CD4-positive, alpha-beta T cell (primary cell): ENCODE measurements at regions of chr1 and their contacts with region 1.

Region 1: DNA sequence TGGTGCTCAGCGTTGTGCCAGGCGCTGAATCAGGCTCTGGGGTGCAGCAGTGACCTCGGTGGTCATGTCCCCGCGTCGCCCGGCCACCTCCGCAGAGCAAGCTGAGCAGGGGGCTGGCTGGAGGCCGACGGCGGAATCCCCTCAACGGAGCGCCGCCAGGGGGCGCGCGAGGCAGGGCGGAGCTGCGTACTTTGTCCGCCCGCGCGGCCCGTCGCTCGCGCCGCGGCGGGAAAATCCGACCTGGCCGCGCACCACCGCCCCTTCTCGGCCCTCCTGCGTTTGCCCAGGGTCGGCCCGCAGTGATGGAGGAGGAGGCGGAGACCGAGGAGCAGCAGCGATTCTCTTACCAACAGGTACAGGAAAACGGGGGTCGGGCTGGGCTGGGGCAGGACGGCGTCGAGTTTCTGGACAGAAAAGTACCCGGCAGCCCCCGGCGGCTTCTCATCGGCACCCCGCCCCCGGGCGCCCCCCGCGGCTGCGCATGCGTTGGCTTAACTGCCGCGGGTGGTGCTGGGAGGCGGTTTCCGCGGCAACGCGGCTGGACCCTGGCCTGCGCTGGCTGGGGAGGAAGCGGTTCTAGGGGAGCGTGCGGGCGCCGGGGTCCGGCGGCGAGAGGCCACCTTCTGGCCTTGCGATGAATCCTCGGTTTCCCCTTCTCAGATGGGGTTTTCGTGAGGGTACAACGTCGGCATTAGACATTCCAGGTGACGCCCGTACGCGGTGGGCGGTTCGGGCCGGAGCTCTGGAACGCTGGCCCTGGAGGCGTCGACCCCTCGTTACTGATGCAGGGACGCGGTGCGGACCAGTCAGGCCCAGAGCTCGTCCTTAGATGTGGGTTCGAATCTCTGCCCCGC is at the start of gene CENPS:
- DNase-seq: peak; percentile 72 to 95 (median 90)
- ATAC-seq: peak; percentile 79
- H3K4me3 ChIP-seq: peak within 1 kb of the TSS; percentile 71
- H3K4me3 Mint-ChIP-seq: peak within 1 kb of the TSS; percentile 94
- H3K27ac ChIP-seq: peak within 1 kb of the TSS; percentile 65 to 68
- H3K27ac Mint-ChIP-seq: peak within 1 kb of the TSS; percentile 92
- H3K4me1 ChIP-seq: peaks cover 26% of the 10 kb centered on the region
- H3K4me1 Mint-ChIP-seq: peaks cover 23% of the 10 kb centered on the region
- H3K27me3 ChIP-seq: no peaks in the 10 kb centered on the region
- H3K27me3 Mint-ChIP-seq: no peaks in the 10 kb centered on the region
- CTCF ChIP-seq: peak; percentile 98
- total RNA-seq, gene CENPS: 3.7 to 4.0 TPM

Region 2: GRCh38 chr1:9874959-9875635 is 555.3 kb before region 1 on chr1:
- CTCF ChIA-PET with region 1: no interaction called
- POLR2A ChIA-PET with region 1: no interaction called
- intact Hi-C with region 1: loop called (anchors 1 kb)
- DNase-seq: peak; percentile 62 to 87 (median 68)
- ATAC-seq: peak; percentile 99
- H3K4me3 ChIP-seq: no peak overlapping the region
- H3K4me3 Mint-ChIP-seq: no peak overlapping the region
- H3K27ac ChIP-seq: no peak overlapping the region
- H3K27ac Mint-ChIP-seq: no peak overlapping the region
- H3K4me1 ChIP-seq: peaks cover 7% of the 10 kb centered on the region
- H3K4me1 Mint-ChIP-seq: peaks cover 7% of the 10 kb centered on the region
- H3K27me3 ChIP-seq: no peaks in the 10 kb centered on the region
- H3K27me3 Mint-ChIP-seq: no peaks in the 10 kb centered on the region
- CTCF ChIP-seq: peak; percentile 93

Region 3: DNA sequence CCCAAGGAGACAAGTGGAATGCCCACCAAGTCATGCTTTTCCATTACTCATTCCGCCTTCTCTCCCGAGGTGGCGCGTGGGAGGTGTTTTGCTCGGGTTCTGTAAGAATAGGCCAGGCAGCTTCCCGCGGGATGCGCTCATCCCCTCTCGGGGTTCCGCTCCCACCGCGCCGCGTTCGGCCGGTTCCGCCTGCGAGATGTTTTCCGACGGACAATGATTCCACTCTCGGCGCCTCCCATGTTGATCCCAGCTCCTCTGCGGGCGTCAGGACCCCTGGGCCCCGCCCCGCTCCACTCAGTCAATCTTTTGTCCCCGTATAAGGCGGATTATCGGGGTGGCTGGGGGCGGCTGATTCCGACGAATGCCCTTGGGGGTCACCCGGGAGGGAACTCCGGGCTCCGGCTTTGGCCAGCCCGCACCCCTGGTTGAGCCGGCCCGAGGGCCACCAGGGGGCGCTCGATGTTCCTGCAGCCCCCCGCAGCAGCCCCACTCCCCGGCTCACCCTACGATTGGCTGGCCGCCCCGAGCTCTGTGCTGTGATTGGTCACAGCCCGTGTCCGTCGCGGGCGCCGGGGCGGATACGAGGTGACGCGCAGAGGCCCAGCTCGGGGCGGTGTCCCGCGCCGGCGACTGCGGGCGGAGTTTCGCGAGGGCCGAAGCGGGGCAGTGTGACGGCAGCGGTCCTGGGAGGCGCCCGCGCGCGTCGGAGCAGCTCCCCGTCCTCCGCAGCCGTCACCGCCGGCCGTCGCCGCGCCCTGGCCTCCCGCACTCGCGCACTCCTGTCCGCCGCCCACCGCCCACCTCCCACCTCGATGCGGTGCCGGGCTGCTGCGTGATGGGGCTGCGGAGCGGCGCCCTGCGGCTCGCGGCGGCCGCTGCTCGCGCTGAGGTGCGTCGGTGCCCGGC is 220.3 kb before region 1 on chr1 and contains the start of gene KIF1B:
- CTCF ChIA-PET with region 1: interaction called, 18 read pairs
- POLR2A ChIA-PET with region 1: interaction called, 14 read pairs
- intact Hi-C with region 1: loop called (anchors 1 kb)
- DNase-seq: peak; percentile 91 to 98 (median 96)
- ATAC-seq: peak; percentile 99
- H3K4me3 ChIP-seq: peak within 1 kb of the TSS; percentile 76
- H3K4me3 Mint-ChIP-seq: peak within 1 kb of the TSS; percentile 94
- H3K27ac ChIP-seq: no peak within 1 kb of the TSS
- H3K27ac Mint-ChIP-seq: peak within 1 kb of the TSS; percentile 82
- H3K4me1 ChIP-seq: peaks cover 17% of the 10 kb centered on the region
- H3K4me1 Mint-ChIP-seq: peaks cover 37% of the 10 kb centered on the region
- H3K27me3 ChIP-seq: no peaks in the 10 kb centered on the region
- H3K27me3 Mint-ChIP-seq: peaks cover 4% of the 10 kb centered on the region
- CTCF ChIP-seq: peak; percentile 99
- total RNA-seq, gene KIF1B: 7.9 to 9.7 TPM

Region 4: GRCh38 chr1:10398734-10399623 is 31.5 kb before region 1 on chr1 and contains the start of gene PGD:
- CTCF ChIA-PET with region 1: interaction called, 19 read pairs
- POLR2A ChIA-PET with region 1: interaction called, 5 read pairs
- intact Hi-C with region 1: loop called in 1 of 2 experiments (anchors 1 kb)
- DNase-seq: peak; percentile 92 to 98 (median 96)
- ATAC-seq: peak; percentile 97
- H3K4me3 ChIP-seq: peak within 1 kb of the TSS; percentile 96
- H3K4me3 Mint-ChIP-seq: peak within 1 kb of the TSS; percentile 98
- H3K27ac ChIP-seq: peak within 1 kb of the TSS; percentile 56 to 70
- H3K27ac Mint-ChIP-seq: peak within 1 kb of the TSS; percentile 79
- H3K4me1 ChIP-seq: peaks cover 21% of the 10 kb centered on the region
- H3K4me1 Mint-ChIP-seq: peaks cover 20% of the 10 kb centered on the region
- H3K27me3 ChIP-seq: no peaks in the 10 kb centered on the region
- H3K27me3 Mint-ChIP-seq: no peaks in the 10 kb centered on the region
- CTCF ChIP-seq: no peak
- total RNA-seq, gene PGD: 16.7 to 17.4 TPM

Region 5: DNA sequence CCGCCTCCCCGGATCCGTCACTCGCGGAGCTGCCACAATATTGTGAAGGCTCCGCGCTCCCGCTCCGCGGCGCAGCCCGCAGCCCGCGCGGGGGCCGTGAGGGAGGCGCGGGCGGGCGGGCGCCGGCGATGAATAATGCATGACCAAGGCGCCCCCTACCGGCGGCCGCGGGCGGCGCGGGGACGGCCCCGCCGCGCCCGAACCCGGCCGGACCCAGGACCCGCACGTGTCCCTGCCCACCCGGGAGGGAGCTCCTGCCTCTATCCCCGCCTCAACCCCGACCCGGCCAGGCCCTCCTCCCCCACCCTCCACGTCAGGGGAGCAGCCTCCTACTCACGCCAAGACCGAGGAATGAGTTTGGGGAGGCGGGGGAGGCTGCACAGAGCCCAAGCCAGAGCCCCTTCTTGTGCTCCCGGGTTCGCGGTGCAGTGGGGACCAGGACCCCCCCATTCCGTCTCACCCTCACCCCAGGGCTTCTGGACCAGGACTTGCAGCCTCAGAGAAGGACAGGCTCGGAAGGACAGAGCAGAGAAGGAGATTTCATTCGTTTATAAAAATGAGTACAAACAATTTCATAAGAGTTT is 436.8 kb after region 1 on chr1:
- CTCF ChIA-PET with region 1: no interaction called
- POLR2A ChIA-PET with region 1: no interaction called
- intact Hi-C with region 1: loop called in 1 of 2 experiments (anchors 2 kb)
- DNase-seq: peak; percentile 39 to 82 (median 59)
- ATAC-seq: peak; percentile 85
- H3K4me3 ChIP-seq: peak overlapping the region; percentile 29
- H3K4me3 Mint-ChIP-seq: peak overlapping the region; percentile 6
- H3K27ac ChIP-seq: no peak overlapping the region
- H3K27ac Mint-ChIP-seq: no peak overlapping the region
- H3K4me1 ChIP-seq: peaks cover 16% of the 10 kb centered on the region
- H3K4me1 Mint-ChIP-seq: peaks cover 25% of the 10 kb centered on the region
- H3K27me3 ChIP-seq: peaks cover 40 to 41% of the 10 kb centered on the region in 2 experiments
- H3K27me3 Mint-ChIP-seq: peaks cover 71% of the 10 kb centered on the region
- CTCF ChIP-seq: peak; percentile 48